ENCODE measurements at regions of chr16 and their contacts with region 1.

Region 1: GRCh38 chr16:25257956-25258823 is 545 bp upstream of the ZKSCAN2 start:
- DNase-seq: peak; percentile 82
- ATAC-seq: peak; percentile 61
- H3K4me3 Mint-ChIP-seq: peak overlapping the region; percentile 97
- H3K27ac Mint-ChIP-seq: peak overlapping the region; percentile 98
- H3K4me1 Mint-ChIP-seq: peaks cover 65% of the 10 kb centered on the region
- H3K27me3 Mint-ChIP-seq: no peaks in the 10 kb centered on the region

Region 2: GRCh38 chr16:25093208-25094061 is 164.8 kb before region 1 on chr16:
- CTCF ChIA-PET with region 1: no interaction called
- POLR2A ChIA-PET with region 1: no interaction called
- DNase-seq: peak; percentile 25
- ATAC-seq: peak; percentile 70
- H3K4me3 Mint-ChIP-seq: peak overlapping the region; percentile 6
- H3K27ac Mint-ChIP-seq: peak overlapping the region; percentile 83
- H3K4me1 Mint-ChIP-seq: peaks cover 22% of the 10 kb centered on the region
- H3K27me3 Mint-ChIP-seq: no peaks in the 10 kb centered on the region

Region 3: DNA sequence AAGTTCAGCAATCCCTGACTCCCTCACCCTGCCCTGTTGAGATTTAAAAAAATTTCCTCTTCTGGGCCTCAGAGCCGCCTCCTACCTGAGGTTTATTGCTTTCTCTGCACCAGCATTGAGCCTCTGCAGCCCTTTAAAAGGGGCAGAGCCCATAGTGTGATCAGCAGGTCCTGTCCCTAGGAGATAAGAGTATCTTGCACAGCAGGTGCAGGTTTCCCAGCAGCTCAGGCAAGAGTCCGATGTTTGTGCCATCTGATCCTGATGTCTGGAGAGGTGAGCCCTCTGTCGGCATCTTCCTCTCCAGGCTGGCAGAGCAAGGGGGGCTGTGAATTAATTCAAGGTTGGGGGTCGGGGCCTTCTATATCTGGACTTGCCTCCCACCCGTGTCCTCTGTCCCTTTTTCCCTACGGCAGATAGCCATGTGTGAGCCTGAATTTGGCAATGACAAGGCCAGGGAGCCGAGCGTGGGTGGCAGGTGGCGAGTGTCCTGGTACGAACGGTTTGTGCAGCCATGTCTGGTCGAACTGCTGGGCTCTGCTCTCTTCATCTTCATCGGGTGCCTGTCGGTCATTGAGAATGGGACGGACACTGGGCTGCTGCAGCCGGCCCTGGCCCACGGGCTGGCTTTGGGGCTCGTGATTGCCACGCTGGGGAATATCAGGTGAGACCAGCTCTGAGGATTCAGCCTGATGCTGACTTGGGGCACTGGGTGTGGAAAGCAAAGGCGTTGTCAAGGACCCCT is 41.2 kb before region 1 on chr16 and contains the start of gene AQP8:
- CTCF ChIA-PET with region 1: no interaction called
- POLR2A ChIA-PET with region 1: no interaction called
- DNase-seq: no peak
- ATAC-seq: no peak
- H3K4me3 Mint-ChIP-seq: no peak within 1 kb of the TSS
- H3K27ac Mint-ChIP-seq: no peak within 1 kb of the TSS
- H3K4me1 Mint-ChIP-seq: no peaks in the 10 kb centered on the region
- H3K27me3 Mint-ChIP-seq: peaks cover 2% of the 10 kb centered on the region
- total RNA-seq, gene AQP8: 0.18 TPM in 1 of 2 experiments, not detected in the other

Region 4: GRCh38 chr16:25235991-25236390 is 22.2 kb before region 1 on chr16:
- CTCF ChIA-PET with region 1: interaction called, 27 read pairs
- POLR2A ChIA-PET with region 1: no interaction called
- DNase-seq: no peak
- ATAC-seq: no peak
- H3K4me3 Mint-ChIP-seq: no peak overlapping the region
- H3K27ac Mint-ChIP-seq: no peak overlapping the region
- H3K4me1 Mint-ChIP-seq: no peaks in the 10 kb centered on the region
- H3K27me3 Mint-ChIP-seq: peaks cover 2% of the 10 kb centered on the region

Region 5: DNA sequence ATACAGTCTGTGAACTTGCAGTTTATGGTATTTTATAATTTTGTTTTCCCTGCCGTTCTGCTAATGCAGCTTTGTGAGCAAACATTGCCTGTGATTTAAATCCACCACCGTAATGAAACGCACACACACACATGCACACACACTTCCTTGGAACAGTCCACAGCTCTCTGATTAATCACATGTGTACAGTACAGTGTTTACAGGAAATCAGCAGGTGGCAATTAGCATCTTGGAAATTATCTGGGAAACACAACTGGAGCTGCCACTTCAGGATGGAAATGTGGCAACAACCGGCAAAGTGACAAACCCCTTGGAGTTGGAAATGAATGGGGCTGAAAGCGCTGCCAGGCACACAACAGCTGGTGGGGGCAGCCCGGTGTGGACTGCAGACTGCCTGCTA is 12.4 kb after region 1 on chr16:
- CTCF ChIA-PET with region 1: interaction called, 10 read pairs
- POLR2A ChIA-PET with region 1: no interaction called
- DNase-seq: no peak
- ATAC-seq: no peak
- H3K4me3 Mint-ChIP-seq: no peak overlapping the region
- H3K27ac Mint-ChIP-seq: no peak overlapping the region
- H3K4me1 Mint-ChIP-seq: no peaks in the 10 kb centered on the region
- H3K27me3 Mint-ChIP-seq: no peaks in the 10 kb centered on the region

Region 6: GRCh38 chr16:25523183-25523582 is 265.0 kb after region 1 on chr16:
- CTCF ChIA-PET with region 1: no interaction called
- POLR2A ChIA-PET with region 1: no interaction called
- DNase-seq: no peak
- ATAC-seq: no peak
- H3K4me3 Mint-ChIP-seq: no peak overlapping the region
- H3K27ac Mint-ChIP-seq: no peak overlapping the region
- H3K4me1 Mint-ChIP-seq: no peaks in the 10 kb centered on the region
- H3K27me3 Mint-ChIP-seq: no peaks in the 10 kb centered on the region

Measured in activated CD8-positive, alpha-beta T cell treated with anti-CD3 and anti-CD28 coated beads, Interleukin-2, amount 10 ng/mL, durations not matched to agents 7 days and 5 days (primary cell).